B cell (primary cell): ENCODE measurements at regions of chr19 and their contacts with region 1.

Region 1: GRCh38 chr19:1343041-1343440 is 40.7 kb upstream of the NDUFS7 start:
- DNase-seq: no peak
- ATAC-seq: no peak
- H3K4me3 ChIP-seq: no peak overlapping the region
- H3K4me3 Mint-ChIP-seq: no peak overlapping the region
- H3K27ac ChIP-seq: no peak overlapping the region
- H3K27ac Mint-ChIP-seq: no peak overlapping the region
- H3K4me1 ChIP-seq: peaks cover 10 to 15% of the 10 kb centered on the region in 2 donors
- H3K4me1 Mint-ChIP-seq: peaks cover 10% of the 10 kb centered on the region
- H3K27me3 ChIP-seq: no peaks in the 10 kb centered on the region
- H3K27me3 Mint-ChIP-seq: no peaks in the 10 kb centered on the region
- CTCF ChIP-seq: no peak

Region 2: GRCh38 chr19:1275260-1275975 is 67.6 kb before region 1 on chr19 and contains the start of gene FAM174C:
- CTCF ChIA-PET with region 1: no interaction called
- POLR2A ChIA-PET with region 1: interaction called, 5 read pairs
- intact Hi-C with region 1: loop called (anchors 2 kb)
- DNase-seq: peak; percentile 99
- ATAC-seq: peak; percentile 82
- H3K4me3 ChIP-seq: peak within 1 kb of the TSS; percentile 30 to 85 (median 75)
- H3K4me3 Mint-ChIP-seq: peak within 1 kb of the TSS; percentile 89
- H3K27ac ChIP-seq: peak within 1 kb of the TSS; percentile 93 to 97
- H3K27ac Mint-ChIP-seq: peak within 1 kb of the TSS; percentile 94
- H3K4me1 ChIP-seq: peaks cover 39 to 63% of the 10 kb centered on the region in 2 donors
- H3K4me1 Mint-ChIP-seq: peaks cover 49% of the 10 kb centered on the region
- H3K27me3 ChIP-seq: no peaks in the 10 kb centered on the region
- H3K27me3 Mint-ChIP-seq: no peaks in the 10 kb centered on the region
- CTCF ChIP-seq: peak; percentile 15
- total RNA-seq, gene FAM174C: 34.5 and 41.1 TPM in 2 replicates

Region 3: GRCh38 chr19:1354977-1355567 is 12.0 kb after region 1 on chr19:
- CTCF ChIA-PET with region 1: no interaction called
- POLR2A ChIA-PET with region 1: interaction called, 4 read pairs
- intact Hi-C with region 1: loop called (anchors 1 kb)
- DNase-seq: no peak
- ATAC-seq: peak; percentile 48
- H3K4me3 ChIP-seq: peak overlapping the region; percentile 35 to 78 (median 72)
- H3K4me3 Mint-ChIP-seq: peak overlapping the region; percentile 93
- H3K27ac ChIP-seq: peak overlapping the region in 1 of 2 donors; percentile 58
- H3K27ac Mint-ChIP-seq: peak overlapping the region; percentile 70
- H3K4me1 ChIP-seq: peaks cover 9 to 18% of the 10 kb centered on the region in 2 donors
- H3K4me1 Mint-ChIP-seq: peaks cover 18% of the 10 kb centered on the region
- H3K27me3 ChIP-seq: no peaks in the 10 kb centered on the region
- H3K27me3 Mint-ChIP-seq: no peaks in the 10 kb centered on the region
- CTCF ChIP-seq: no peak